ENCODE measurements at regions of chr1 and their contacts with region 1.

Region 1: DNA sequence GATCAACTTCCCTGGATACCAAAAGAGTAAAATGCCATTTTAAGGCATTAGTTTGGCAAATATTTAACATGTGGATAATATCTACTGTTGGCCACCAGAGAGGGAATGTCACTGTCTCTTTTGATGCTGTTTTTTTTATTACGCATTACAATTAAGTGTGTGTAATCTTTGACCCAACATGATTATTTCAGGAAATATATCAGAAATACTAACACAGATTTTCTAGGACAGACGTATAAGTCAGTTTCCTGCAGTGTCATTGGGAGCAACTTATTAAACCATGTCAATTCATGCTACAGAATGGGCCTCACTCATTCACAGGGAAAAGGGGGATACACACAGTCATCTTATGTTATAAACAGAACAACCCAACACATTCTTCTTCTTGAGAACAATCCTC is 903.8 kb upstream of the ADGRL2 start:
- DNase-seq: peak; percentile 61
- H3K4me3 ChIP-seq: no peak overlapping the region
- H3K27ac ChIP-seq: peak overlapping the region; percentile 1
- H3K4me1 ChIP-seq: peaks cover 11% of the 10 kb centered on the region
- H3K27me3 ChIP-seq: no peaks in the 10 kb centered on the region
- CTCF ChIP-seq: no peak
- POLR2A ChIP-seq: no peak

Region 2: DNA sequence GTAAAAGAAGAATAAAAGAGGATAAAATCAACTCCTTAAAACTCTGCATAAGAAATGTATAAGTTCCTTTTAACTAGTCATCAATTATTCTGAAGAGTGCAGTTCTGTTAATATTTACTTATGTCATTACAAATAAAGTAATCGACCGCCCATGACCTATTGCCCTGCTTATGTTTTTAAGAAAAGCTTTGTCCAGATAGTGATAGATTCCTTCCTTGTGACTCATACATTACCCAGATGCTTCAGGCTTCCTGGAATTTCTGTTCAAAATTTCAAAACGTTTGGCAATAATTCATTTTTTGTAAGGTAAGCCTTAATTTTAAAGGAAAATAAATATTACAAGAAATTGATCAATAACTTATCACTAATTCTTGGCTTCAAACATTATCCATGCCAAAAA is 14.4 kb before region 1 on chr1:
- CTCF ChIA-PET with region 1: no interaction called
- POLR2A ChIA-PET with region 1: no interaction called
- dilution Hi-C with region 1: no loop called
- intact Hi-C with region 1: loop called (anchors 2 kb)
- DNase-seq: peak; percentile 70
- H3K4me3 ChIP-seq: no peak overlapping the region
- H3K27ac ChIP-seq: peak overlapping the region; percentile 11
- H3K4me1 ChIP-seq: peaks cover 13% of the 10 kb centered on the region
- H3K27me3 ChIP-seq: no peaks in the 10 kb centered on the region
- CTCF ChIP-seq: no peak
- POLR2A ChIP-seq: no peak

Measured in endothelial cell of umbilical vein (primary cell).